Vagina (tissue), 2 donors: ENCODE measurements at regions of chr17 and their contacts with region 1.

Region 1: DNA sequence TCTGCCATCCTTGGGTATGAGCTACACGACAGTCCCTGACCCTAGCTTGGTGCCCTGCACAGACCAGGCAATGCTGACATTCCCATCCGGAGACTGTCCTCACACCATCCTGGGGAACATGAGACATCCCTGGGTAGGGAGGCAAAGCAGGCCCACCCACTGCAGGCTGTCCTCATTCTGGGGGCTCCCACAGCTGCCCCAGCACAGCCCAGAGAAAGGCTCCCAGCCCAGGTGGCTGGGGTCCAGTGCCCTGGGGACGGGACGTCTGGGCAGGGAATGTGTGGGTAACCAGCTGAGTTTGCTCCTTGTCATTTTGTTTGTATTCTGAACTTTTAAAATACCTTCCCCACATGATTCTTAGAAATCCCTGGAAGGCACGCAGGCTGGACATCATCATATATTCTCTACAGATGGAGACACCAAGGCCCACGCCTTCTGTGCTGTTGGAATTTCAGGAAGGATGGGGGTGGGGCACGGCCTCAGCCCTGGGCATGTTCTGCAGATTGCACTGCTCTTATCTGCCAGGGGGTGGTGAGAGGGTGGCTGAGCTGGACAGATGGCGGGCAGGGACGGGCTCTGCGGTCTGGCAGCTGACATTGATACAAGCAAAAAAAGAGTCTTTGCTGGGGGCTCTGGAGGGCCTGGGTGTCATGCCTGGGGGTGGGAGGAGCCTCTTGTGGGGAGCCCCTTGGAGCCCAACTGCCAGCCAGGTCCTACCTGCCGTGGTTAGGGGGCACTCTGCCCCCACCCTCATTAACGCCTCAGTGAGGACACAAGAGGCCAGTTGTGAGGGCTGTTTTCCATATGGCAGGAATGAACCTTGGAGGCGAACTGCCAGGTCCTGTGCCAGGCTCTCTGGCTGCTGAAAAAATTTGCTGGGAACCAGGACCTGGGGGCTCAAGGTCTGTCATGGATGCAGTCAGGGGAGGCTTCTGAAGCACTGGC is 28.4 kb downstream of the LRRC75A start:
- DNase-seq: no peak
- H3K4me3 ChIP-seq: no peak overlapping the region
- H3K27ac ChIP-seq: no peak overlapping the region
- H3K4me1 ChIP-seq: peaks cover 20% of the 10 kb centered on the region
- H3K27me3 ChIP-seq: no peaks in the 10 kb centered on the region
- CTCF ChIP-seq: no peak
- POLR2A ChIP-seq: no peak

Region 2: GRCh38 chr17:16415031-16415924 is 48.4 kb before region 1 on chr17 and contains the start of gene TRPV2:
- intact Hi-C with region 1: no loop called
- DNase-seq: no peak
- H3K4me3 ChIP-seq: peak within 1 kb of the TSS; percentile 47 to 65
- H3K27ac ChIP-seq: peak within 1 kb of the TSS; percentile 91
- H3K4me1 ChIP-seq: peaks cover 45% of the 10 kb centered on the region
- H3K27me3 ChIP-seq: no peaks in the 10 kb centered on the region
- CTCF ChIP-seq: peak in 1 of 3 experiments; percentile 26
- POLR2A ChIP-seq: no peak
- total RNA-seq, gene TRPV2: 22.3 TPM

Region 3: GRCh38 chr17:16511593-16511992 is 48.0 kb after region 1 on chr17:
- intact Hi-C with region 1: loop called (anchors 2 kb)
- DNase-seq: no peak
- H3K4me3 ChIP-seq: no peak overlapping the region
- H3K27ac ChIP-seq: no peak overlapping the region
- H3K4me1 ChIP-seq: no peaks in the 10 kb centered on the region
- H3K27me3 ChIP-seq: no peaks in the 10 kb centered on the region
- CTCF ChIP-seq: no peak
- POLR2A ChIP-seq: no peak